OCI-LY7 (cell line): ENCODE measurements at regions of chr7 and their contacts with region 1.

Region 1: GRCh38 chr7:47153076-47153475 is 428.8 kb downstream of the TNS3 start:
- DNase-seq: peak; percentile 69
- H3K4me3 ChIP-seq: peak overlapping the region; percentile 63
- H3K27ac ChIP-seq: peak overlapping the region; percentile 98
- H3K4me1 ChIP-seq: peaks cover 91% of the 10 kb centered on the region
- CTCF ChIP-seq: no peak

Region 2: DNA sequence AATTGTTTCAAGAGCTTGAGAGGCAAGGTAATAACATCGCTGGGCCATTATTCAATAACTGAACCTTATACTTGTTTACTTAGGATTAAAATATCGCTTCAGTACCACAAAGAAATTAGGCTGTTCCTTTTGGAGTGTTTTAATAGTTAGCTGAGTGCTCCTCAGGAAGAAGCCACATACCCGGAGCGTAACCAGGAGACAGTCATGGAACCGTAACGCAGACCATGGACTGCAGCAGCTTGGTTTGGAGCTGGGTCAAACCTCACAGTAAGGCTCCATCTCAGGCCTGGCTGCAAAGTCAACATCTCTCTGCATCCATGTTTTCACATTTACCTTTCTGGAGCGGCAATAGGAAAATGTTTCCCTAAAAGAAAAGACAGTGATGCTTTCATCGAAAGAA is 170.1 kb before region 1 on chr7:
- CTCF ChIA-PET with region 1: no interaction called
- POLR2A ChIA-PET with region 1: no interaction called
- intact Hi-C with region 1: no loop called
- DNase-seq: no peak
- H3K4me3 ChIP-seq: no peak overlapping the region
- H3K27ac ChIP-seq: no peak overlapping the region
- H3K4me1 ChIP-seq: no peaks in the 10 kb centered on the region
- CTCF ChIP-seq: no peak

Region 3: GRCh38 chr7:47170516-47170915 is 17.4 kb after region 1 on chr7:
- CTCF ChIA-PET with region 1: interaction called, 3 read pairs
- POLR2A ChIA-PET with region 1: interaction called, 22 read pairs
- intact Hi-C with region 1: no loop called
- DNase-seq: peak; percentile 56
- H3K4me3 ChIP-seq: no peak overlapping the region
- H3K27ac ChIP-seq: peak overlapping the region; percentile 35
- H3K4me1 ChIP-seq: peaks cover 30% of the 10 kb centered on the region
- CTCF ChIP-seq: peak; percentile 85

Region 4: DNA sequence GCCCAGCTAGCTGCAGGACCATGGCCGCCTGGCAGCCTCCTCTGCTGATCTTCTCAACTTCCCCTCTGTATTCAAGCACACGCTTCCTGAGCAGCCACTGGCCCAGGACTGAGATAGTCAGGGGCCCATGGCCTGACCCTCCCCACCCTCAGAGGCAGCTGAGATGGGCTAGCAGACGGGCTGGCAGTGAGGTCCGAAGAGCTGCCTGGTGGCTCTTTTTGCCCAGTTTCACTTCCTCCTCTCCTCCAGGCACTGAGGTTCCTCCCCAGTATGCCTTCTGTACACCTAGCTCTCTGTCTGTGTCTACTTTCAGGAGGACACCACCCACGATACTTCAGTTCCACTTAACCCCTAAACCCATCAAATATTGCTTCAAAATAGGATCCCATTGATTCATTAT is 33.2 kb after region 1 on chr7:
- CTCF ChIA-PET with region 1: interaction called, 5 read pairs
- POLR2A ChIA-PET with region 1: interaction called, 20 read pairs
- intact Hi-C with region 1: loop called (anchors 2 kb)
- DNase-seq: peak; percentile 92
- H3K4me3 ChIP-seq: peak overlapping the region; percentile 70
- H3K27ac ChIP-seq: peak overlapping the region; percentile 67
- H3K4me1 ChIP-seq: peaks cover 70% of the 10 kb centered on the region
- CTCF ChIP-seq: no peak

Region 5: GRCh38 chr7:47239931-47240421 is 86.9 kb after region 1 on chr7:
- CTCF ChIA-PET with region 1: no interaction called
- POLR2A ChIA-PET with region 1: no interaction called
- intact Hi-C with region 1: no loop called
- DNase-seq: no peak
- H3K4me3 ChIP-seq: no peak overlapping the region
- H3K27ac ChIP-seq: no peak overlapping the region
- H3K4me1 ChIP-seq: no peaks in the 10 kb centered on the region
- CTCF ChIP-seq: no peak